ENCODE measurements at regions of chr5 and their contacts with region 1.

Region 1: GRCh38 chr5:174532455-174533453 is 191.6 kb upstream of the MSX2 start:
- DNase-seq: peak; percentile 95
- H3K4me3 Mint-ChIP-seq: peak overlapping the region; percentile 49
- H3K27ac Mint-ChIP-seq: peak overlapping the region; percentile 94
- H3K4me1 Mint-ChIP-seq: peaks cover 84% of the 10 kb centered on the region
- H3K27me3 Mint-ChIP-seq: no peaks in the 10 kb centered on the region
- CTCF ChIP-seq: no peak

Region 2: DNA sequence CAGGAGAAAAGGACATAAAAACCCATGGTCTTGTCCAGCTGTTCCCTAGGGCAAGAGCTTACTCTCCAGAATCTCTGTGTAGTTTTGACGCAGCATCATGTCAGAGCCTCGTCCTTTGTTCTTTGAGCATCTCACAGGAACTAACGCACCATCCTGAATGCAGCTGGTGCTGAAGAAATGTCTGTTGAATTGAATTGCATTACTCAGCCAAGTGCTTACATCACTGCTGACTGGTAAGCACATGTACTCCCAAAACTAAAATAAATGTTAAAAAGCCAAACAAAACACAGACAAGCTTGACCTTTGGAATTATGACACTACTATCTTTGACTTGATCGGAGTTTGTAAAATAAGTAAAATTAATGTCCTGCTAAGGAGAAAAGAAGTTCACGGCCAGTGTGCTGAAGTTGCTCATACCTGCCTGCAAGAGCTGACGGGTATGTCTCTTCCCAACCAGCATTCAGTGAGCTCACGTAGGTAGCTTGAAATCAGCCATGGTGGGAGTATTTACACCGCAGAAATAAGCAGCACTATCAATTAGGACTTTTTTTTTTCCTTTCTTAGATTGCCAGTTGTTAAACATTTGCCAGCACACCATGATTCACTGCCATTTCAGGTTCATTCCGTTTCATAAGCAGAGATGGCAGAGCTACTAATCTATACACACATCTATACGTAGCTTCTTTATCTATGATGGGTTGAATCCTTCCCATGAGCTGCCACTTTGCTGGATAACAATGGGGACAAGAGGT is 119.0 kb before region 1 on chr5:
- CTCF ChIA-PET with region 1: no interaction called
- intact Hi-C with region 1: loop called (anchors 5 kb)
- DNase-seq: no peak
- H3K4me3 Mint-ChIP-seq: peak overlapping the region; percentile 11
- H3K27ac Mint-ChIP-seq: peak overlapping the region; percentile 64
- H3K4me1 Mint-ChIP-seq: peaks cover 53% of the 10 kb centered on the region
- H3K27me3 Mint-ChIP-seq: no peaks in the 10 kb centered on the region
- CTCF ChIP-seq: no peak

Region 3: GRCh38 chr5:174464504-174465165 is 68.1 kb before region 1 on chr5:
- CTCF ChIA-PET with region 1: interaction called, 3 read pairs
- intact Hi-C with region 1: loop called (anchors 2 kb)
- DNase-seq: no peak
- H3K4me3 Mint-ChIP-seq: no peak overlapping the region
- H3K27ac Mint-ChIP-seq: no peak overlapping the region
- H3K4me1 Mint-ChIP-seq: peaks cover 22% of the 10 kb centered on the region
- H3K27me3 Mint-ChIP-seq: no peaks in the 10 kb centered on the region
- CTCF ChIP-seq: peak; percentile 15

Region 4: GRCh38 chr5:174503461-174504265 is 29.1 kb before region 1 on chr5:
- CTCF ChIA-PET with region 1: interaction called, 3 read pairs
- intact Hi-C with region 1: loop called (anchors 2 kb)
- DNase-seq: peak; percentile 82
- H3K4me3 Mint-ChIP-seq: peak overlapping the region; percentile 65
- H3K27ac Mint-ChIP-seq: peak overlapping the region; percentile 79
- H3K4me1 Mint-ChIP-seq: peaks cover 54% of the 10 kb centered on the region
- H3K27me3 Mint-ChIP-seq: no peaks in the 10 kb centered on the region
- CTCF ChIP-seq: no peak

Region 5: DNA sequence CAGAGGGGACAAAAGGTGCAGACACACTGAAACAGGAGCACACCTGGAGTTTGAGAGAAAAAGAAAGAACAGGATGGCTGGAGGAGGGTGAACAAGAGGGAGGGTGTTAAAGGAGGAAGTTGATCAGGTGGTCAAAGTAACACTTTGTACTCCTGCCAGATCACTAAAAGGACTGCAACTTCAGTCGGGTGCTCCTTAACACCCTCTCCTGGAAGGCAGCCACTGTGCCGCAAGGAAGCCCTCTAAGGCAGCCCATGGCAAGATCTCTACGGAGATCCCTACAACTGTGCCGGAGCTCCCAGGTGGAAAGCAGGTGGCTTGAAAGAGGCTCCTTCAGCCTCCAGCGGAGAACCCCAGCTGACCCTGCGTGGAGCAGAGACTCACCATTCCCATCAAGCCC is 67.2 kb after region 1 on chr5:
- CTCF ChIA-PET with region 1: no interaction called
- intact Hi-C with region 1: loop called (anchors 2 kb)
- DNase-seq: peak; percentile 55
- H3K4me3 Mint-ChIP-seq: peak overlapping the region; percentile 61
- H3K27ac Mint-ChIP-seq: peak overlapping the region; percentile 91
- H3K4me1 Mint-ChIP-seq: peaks cover 43% of the 10 kb centered on the region
- H3K27me3 Mint-ChIP-seq: no peaks in the 10 kb centered on the region
- CTCF ChIP-seq: no peak

Region 6: GRCh38 chr5:174724491-174725260 is 191.9 kb after region 1 on chr5 and contains the start of gene MSX2:
- CTCF ChIA-PET with region 1: interaction called, 3 read pairs
- intact Hi-C with region 1: loop called (anchors 5 kb)
- DNase-seq: peak; percentile 95
- H3K4me3 Mint-ChIP-seq: peak within 1 kb of the TSS; percentile 81
- H3K27ac Mint-ChIP-seq: peak within 1 kb of the TSS; percentile 81
- H3K4me1 Mint-ChIP-seq: peaks cover 31% of the 10 kb centered on the region
- H3K27me3 Mint-ChIP-seq: peaks cover 43% of the 10 kb centered on the region
- CTCF ChIP-seq: no peak
- total RNA-seq, gene MSX2: 8.4 and 10.4 TPM in 2 replicates

Measured in Calu3 (cell line).